ENCODE measurements at regions of chr13 and their contacts with region 1.

Region 1: GRCh38 chr13:48892053-48892690 is 83.5 kb upstream of the FNDC3A start:
- DNase-seq: peak; percentile 91
- H3K4me3 ChIP-seq: no peak overlapping the region
- H3K27ac ChIP-seq: peak overlapping the region; percentile 74
- H3K4me1 ChIP-seq: peaks cover 27% of the 10 kb centered on the region
- H3K27me3 ChIP-seq: no peaks in the 10 kb centered on the region
- CTCF ChIP-seq: no peak
- POLR2A ChIP-seq: no peak

Region 2: DNA sequence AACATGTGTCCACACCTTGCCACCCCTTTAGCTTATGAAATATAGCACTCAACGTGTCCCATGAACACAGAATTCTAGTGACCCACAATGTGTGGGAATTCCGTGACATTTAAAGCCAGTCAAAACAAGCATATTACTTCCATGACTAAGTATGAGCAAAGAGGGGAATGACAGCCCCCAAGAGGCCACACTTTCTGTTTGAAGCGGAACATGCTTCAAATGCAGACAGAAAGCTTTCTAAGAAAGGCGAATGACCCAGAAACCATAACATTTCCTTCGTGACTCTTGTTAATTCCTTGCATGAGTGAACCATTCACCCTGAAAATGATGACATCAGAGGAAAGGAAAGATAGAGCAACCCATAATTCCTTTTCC is 38.5 kb before region 1 on chr13:
- CTCF ChIA-PET with region 1: interaction called, 5 read pairs
- POLR2A ChIA-PET with region 1: no interaction called
- dilution Hi-C with region 1: no loop called
- intact Hi-C with region 1: loop called (anchors 5 kb)
- DNase-seq: peak; percentile 91
- H3K4me3 ChIP-seq: no peak overlapping the region
- H3K27ac ChIP-seq: no peak overlapping the region
- H3K4me1 ChIP-seq: peaks cover 9% of the 10 kb centered on the region
- H3K27me3 ChIP-seq: no peaks in the 10 kb centered on the region
- CTCF ChIP-seq: no peak
- POLR2A ChIP-seq: no peak

Measured in endothelial cell of umbilical vein (primary cell).